Dorsolateral prefrontal cortex (tissue), 120 donors: ENCODE measurements at regions of chr1 and their contacts with region 1.

Region 1: DNA sequence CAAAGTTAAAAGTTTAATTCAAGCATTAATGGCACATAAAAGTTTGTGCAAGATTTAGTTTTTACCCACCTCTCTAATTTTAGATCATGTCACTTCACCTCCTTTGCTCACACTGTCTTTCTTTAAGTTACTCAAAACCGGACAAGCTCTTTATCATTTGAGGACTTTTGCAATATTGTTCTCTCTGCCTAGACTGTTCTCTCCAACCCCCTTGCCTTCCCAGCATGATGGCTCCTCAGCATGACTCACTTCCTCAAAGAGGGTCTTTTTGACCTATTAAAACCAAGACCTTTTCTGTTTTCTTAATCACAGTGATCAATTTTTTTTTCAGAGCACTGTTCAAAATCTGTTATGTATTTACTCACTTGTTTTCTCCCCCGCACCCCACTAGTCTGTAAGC is 61.3 kb downstream of the XKR8 start:
- DNase-seq: no peak
- H3K4me3 ChIP-seq: no peak overlapping the region
- H3K27ac ChIP-seq: no peak overlapping the region
- H3K27me3 ChIP-seq: no peaks in the 10 kb centered on the region
- CTCF ChIP-seq: no peak

Region 2: DNA sequence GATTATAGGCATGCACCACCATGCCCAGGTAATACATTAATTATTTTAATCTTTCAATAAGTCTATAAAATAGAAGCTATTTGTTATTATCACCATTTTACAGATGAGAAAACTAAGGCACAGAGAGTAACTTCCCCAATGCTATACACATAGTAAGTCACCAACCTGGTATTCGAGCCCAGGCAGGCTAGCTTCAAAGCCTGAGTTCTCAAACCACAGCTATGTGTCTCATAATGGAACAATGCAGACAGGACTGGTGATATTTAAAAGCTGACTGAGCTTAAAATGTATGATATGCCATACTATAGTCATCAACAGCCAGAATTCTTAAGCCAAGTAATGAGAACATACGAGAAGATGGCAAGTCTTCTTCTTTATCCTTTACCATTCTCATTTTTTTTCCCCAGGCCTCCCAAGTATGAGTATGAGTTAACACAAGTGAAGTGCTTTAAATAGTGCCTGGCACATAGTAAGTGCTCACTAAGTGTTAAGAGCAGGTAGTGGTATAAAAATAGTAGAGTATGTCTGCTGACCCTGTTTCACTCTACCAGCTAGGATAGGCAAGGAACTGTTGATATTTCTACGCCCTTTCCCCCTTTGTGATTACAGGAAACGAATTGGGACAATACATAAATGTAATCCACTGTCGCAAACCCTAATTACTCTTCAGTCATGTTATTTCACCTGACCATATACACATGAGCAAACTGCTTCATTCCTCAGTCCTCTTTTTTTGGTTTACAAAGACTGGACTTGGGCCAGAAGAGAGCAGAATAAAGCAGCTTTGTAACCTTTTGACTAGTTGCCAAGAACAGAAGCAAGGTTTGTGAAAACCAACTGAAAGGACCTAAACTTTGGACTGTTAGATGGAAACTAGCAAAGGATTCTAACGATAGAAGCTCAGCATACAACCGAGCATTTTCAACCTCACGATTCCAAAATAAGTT is 57.9 kb after region 1 on chr1:
- intact Hi-C with region 1: loop called in 1 of 2 experiments (anchors 5 kb)
- DNase-seq: no peak
- H3K4me3 ChIP-seq: peak overlapping the region in 4 of 59 donors; percentile 4 to 16 (median 8)
- H3K27ac ChIP-seq: peak overlapping the region in 44 of 59 donors; percentile 1 to 76 (median 42)
- H3K27me3 ChIP-seq: no peaks in the 10 kb centered on the region
- CTCF ChIP-seq: no peak